SK-N-SH (cell line): ENCODE measurements at regions of chr3 and their contacts with region 1.

Region 1: DNA sequence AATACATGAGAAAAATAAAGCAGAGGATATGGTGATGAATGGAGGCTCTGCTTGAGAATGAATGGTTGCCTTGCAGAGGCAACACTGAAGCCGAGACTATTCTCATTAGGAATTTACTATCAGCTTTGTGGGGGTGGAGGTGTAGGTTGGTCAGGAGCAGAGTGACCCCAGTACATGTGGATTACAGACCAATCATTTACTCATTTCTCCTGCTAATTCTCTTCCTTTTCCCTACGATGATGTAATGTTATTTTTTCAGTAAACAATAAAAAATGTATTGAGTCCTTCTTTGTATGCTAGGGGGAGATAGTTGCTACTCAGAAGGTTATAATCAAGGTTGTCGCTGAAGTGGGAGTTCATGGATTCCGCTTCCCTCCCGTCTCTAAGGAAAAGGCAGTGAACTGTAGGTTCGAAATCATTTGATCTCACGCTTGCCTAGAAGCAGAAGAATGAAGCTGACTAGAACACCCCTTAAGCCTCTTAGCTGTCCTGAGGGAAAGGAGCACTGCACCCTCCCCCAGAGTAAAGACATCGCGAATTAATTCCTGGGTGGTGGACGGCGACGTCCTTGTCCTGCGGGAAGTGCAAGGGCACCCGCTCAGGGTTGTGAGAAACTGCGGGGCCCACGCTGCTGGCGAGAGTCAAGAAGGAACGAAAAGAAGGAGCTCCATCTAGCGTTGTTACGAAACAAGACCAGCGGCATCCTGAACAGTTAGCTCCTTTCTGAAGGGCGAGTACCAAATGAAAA is 213.2 kb upstream of the PFN2 start:
- DNase-seq: peak; percentile 63
- H3K4me3 ChIP-seq: peak overlapping the region; percentile 42 to 44
- H3K27ac ChIP-seq: peak overlapping the region; percentile 62 to 73; a peak in 3 of 4 replicates
- H3K4me1 ChIP-seq: peaks cover 5 to 15% of the 10 kb centered on the region in 2 experiments; a peak in 2 of 4 replicates
- H3K27me3 ChIP-seq: no peaks in the 10 kb centered on the region
- CTCF ChIP-seq: peak; percentile 74
- EP300 ChIP-seq: no peak
- RAD21 ChIP-seq: peak; percentile 90

Region 2: GRCh38 chr3:149417174-149417573 is 766.7 kb before region 1 on chr3:
- CTCF ChIA-PET with region 1: no interaction called
- POLR2A ChIA-PET with region 1: no interaction called
- DNase-seq: no peak
- H3K4me3 ChIP-seq: no peak overlapping the region
- H3K27ac ChIP-seq: no peak overlapping the region
- H3K4me1 ChIP-seq: no peaks in the 10 kb centered on the region
- H3K27me3 ChIP-seq: no peaks in the 10 kb centered on the region
- CTCF ChIP-seq: no peak
- EP300 ChIP-seq: no peak
- RAD21 ChIP-seq: no peak

Region 3: GRCh38 chr3:149765762-149766334 is 418.0 kb before region 1 on chr3:
- CTCF ChIA-PET with region 1: interaction called, 15 read pairs
- POLR2A ChIA-PET with region 1: no interaction called
- DNase-seq: peak; percentile 9
- H3K4me3 ChIP-seq: no peak overlapping the region
- H3K27ac ChIP-seq: no peak overlapping the region
- H3K4me1 ChIP-seq: no peaks in the 10 kb centered on the region
- H3K27me3 ChIP-seq: no peaks in the 10 kb centered on the region; the same call in 1 of the 2 replicates
- CTCF ChIP-seq: peak; percentile 71
- EP300 ChIP-seq: no peak
- RAD21 ChIP-seq: peak; percentile 72

Region 4: DNA sequence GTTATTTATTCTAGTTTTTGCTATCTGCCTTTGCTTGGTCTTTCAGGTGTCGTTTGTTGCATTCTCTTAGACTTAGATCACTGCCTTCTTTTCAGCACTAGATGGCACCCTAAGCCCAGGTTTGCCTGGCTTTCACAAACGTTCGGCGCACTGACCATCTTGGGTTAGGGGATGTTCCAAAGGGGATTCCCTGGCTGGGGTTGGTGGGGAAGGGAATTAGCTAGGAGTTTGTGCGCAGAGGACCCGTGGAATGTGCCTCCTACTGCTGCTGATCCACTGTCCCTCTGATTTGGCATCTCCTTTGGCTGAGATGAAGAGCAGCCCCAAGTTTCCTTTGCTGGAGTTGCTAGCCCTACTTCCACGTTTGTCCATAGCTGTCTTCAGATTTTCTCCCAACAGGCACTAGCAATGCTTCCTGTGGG is 247.0 kb before region 1 on chr3:
- CTCF ChIA-PET with region 1: interaction called, 26 read pairs
- POLR2A ChIA-PET with region 1: no interaction called
- DNase-seq: peak; percentile 48
- H3K4me3 ChIP-seq: no peak overlapping the region; a peak in 1 of 4 replicates
- H3K27ac ChIP-seq: no peak overlapping the region
- H3K4me1 ChIP-seq: no peaks in the 10 kb centered on the region
- H3K27me3 ChIP-seq: no peaks in the 10 kb centered on the region
- CTCF ChIP-seq: peak; percentile 63
- EP300 ChIP-seq: no peak
- RAD21 ChIP-seq: peak; percentile 88

Region 5: GRCh38 chr3:149958171-149958796 is 225.6 kb before region 1 on chr3:
- CTCF ChIA-PET with region 1: interaction called, 134 read pairs
- POLR2A ChIA-PET with region 1: no interaction called
- DNase-seq: no peak
- H3K4me3 ChIP-seq: no peak overlapping the region
- H3K27ac ChIP-seq: no peak overlapping the region
- H3K4me1 ChIP-seq: peaks cover 19 to 20% of the 10 kb centered on the region in 2 experiments; a peak in 3 of 4 replicates
- H3K27me3 ChIP-seq: no peaks in the 10 kb centered on the region
- CTCF ChIP-seq: no peak
- EP300 ChIP-seq: no peak
- RAD21 ChIP-seq: no peak

Region 6: GRCh38 chr3:149969940-149970715 is 213.7 kb before region 1 on chr3:
- CTCF ChIA-PET with region 1: interaction called, 134 read pairs
- POLR2A ChIA-PET with region 1: interaction called, 7 read pairs
- DNase-seq: peak; percentile 71
- H3K4me3 ChIP-seq: peak overlapping the region; percentile 76 to 93
- H3K27ac ChIP-seq: peak overlapping the region; percentile 94 to 98
- H3K4me1 ChIP-seq: peaks cover 0 to 15% of the 10 kb centered on the region in 2 experiments; a peak in 2 of 4 replicates
- H3K27me3 ChIP-seq: no peaks in the 10 kb centered on the region
- CTCF ChIP-seq: no peak
- EP300 ChIP-seq: no peak
- RAD21 ChIP-seq: no peak

Region 7: GRCh38 chr3:150202711-150203110 is 18.9 kb after region 1 on chr3:
- CTCF ChIA-PET with region 1: interaction called, 10 read pairs
- POLR2A ChIA-PET with region 1: no interaction called
- DNase-seq: no peak
- H3K4me3 ChIP-seq: no peak overlapping the region
- H3K27ac ChIP-seq: no peak overlapping the region
- H3K4me1 ChIP-seq: no peaks in the 10 kb centered on the region
- H3K27me3 ChIP-seq: no peaks in the 10 kb centered on the region
- CTCF ChIP-seq: no peak
- EP300 ChIP-seq: no peak
- RAD21 ChIP-seq: no peak

Region 8: DNA sequence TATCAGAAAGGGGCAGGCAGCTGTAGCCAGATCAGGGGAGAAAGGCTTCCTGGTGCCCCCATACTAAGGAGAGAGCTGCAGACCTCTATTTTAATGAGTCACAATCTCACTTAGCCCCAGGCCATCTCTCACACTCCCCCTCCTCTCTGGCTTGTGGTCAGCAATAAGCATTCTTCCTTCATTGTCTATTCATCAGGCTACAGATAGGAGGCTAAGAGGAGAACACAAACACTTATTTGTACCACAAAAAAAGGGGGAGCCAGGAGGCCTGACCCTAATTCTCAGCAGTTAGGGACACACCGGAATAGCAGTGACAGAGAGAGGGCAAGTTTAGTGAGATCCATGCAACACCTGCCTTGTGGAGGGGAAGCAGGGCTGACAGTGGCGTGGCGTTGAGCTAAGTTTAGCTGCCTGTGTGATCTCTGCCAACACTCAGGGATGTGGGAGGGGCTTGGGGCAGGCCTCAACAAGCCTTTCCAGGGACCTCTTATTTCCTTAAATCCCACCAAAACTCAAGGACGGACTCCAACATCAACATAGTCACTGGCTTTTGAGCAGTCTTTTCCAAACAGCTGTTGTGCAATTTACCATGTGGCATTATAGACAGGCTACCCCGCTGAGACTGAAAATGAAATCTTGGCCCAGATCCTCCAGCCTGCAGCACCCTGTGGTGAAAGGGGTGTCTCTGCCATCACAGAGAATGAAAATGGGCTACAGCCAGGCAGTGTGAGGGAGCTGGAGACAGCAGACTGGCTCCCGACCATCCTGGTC is 32.4 kb after region 1 on chr3:
- CTCF ChIA-PET with region 1: interaction called, 12 read pairs
- POLR2A ChIA-PET with region 1: no interaction called
- DNase-seq: peak; percentile 32
- H3K4me3 ChIP-seq: no peak overlapping the region
- H3K27ac ChIP-seq: no peak overlapping the region
- H3K4me1 ChIP-seq: peaks cover 10 to 20% of the 10 kb centered on the region in 2 experiments; a peak in 3 of 4 replicates
- H3K27me3 ChIP-seq: no peaks in the 10 kb centered on the region
- CTCF ChIP-seq: no peak
- EP300 ChIP-seq: no peak
- RAD21 ChIP-seq: no peak

Region 9: DNA sequence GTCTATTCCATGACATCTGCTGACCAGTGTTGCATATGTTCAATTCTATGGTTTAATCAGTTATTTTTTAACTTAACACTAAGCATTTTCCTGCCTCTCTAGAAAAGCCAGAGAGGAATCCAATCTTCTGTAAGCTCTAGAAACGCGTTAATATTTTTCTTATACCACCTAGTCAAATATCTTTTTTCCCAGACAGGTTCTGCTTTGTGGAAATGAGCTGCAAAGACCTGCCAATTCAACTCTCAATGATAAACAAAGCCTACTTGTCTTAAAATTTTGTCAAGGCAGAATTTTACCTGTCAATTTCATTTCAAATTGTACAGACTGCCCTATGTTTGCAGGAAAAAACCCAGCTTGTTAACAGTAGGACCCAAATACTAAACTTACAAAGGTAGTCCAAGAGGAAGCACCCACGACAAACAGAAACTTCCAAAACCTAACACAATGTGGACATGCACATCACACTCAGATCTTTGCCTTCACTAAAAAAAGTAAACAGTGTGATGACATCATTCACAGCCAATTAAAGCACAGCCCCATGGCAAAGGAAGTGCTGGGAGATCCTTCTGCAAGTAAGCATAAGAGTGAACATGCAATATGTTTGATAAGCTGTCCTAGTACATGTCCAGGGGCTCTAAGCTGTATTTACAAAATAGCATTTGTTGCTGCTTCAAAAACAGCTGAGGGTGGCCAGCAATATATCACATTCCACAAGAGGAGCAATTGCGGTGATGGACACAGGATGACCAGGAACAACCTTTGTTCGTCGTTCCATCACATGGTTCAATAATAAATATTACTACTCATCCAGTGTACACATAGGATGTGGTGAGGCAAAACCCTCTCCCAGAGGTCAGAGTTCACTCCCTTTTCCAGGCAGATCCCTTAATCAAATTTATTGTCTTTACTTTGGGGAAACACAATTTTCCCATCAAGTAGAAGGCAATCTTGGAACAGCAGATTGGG is 84.9 kb after region 1 on chr3:
- CTCF ChIA-PET with region 1: no interaction called
- POLR2A ChIA-PET with region 1: no interaction called
- DNase-seq: no peak
- H3K4me3 ChIP-seq: no peak overlapping the region
- H3K27ac ChIP-seq: no peak overlapping the region
- H3K4me1 ChIP-seq: no peaks in the 10 kb centered on the region; a peak in 1 of 4 replicates
- H3K27me3 ChIP-seq: no peaks in the 10 kb centered on the region
- CTCF ChIP-seq: no peak
- EP300 ChIP-seq: no peak
- RAD21 ChIP-seq: no peak